ENCODE measurements at regions of chr10 and their contacts with region 1.

Region 1: GRCh38 chr10:110681023-110681681 is 37.0 kb downstream of the RBM20 start:
- DNase-seq: peak; percentile 37
- ATAC-seq: no peak
- H3K4me3 ChIP-seq: no peak overlapping the region
- H3K27ac ChIP-seq: no peak overlapping the region
- H3K4me1 ChIP-seq: no peaks in the 10 kb centered on the region
- H3K27me3 ChIP-seq: no peaks in the 10 kb centered on the region
- CTCF ChIP-seq: peak; percentile 52

Region 2: GRCh38 chr10:110733218-110733952 is 52.2 kb after region 1 on chr10:
- CTCF ChIA-PET with region 1: no interaction called
- POLR2A ChIA-PET with region 1: no interaction called
- intact Hi-C with region 1: loop called (anchors 10 kb)
- DNase-seq: peak; percentile 16
- ATAC-seq: peak; percentile 68
- H3K4me3 ChIP-seq: peak overlapping the region; percentile 66
- H3K27ac ChIP-seq: no peak overlapping the region
- H3K4me1 ChIP-seq: peaks cover 3% of the 10 kb centered on the region; the same call in 1 of the 2 replicates
- H3K27me3 ChIP-seq: no peaks in the 10 kb centered on the region
- CTCF ChIP-seq: no peak

Region 3: GRCh38 chr10:111221682-111222480 is 540.7 kb after region 1 on chr10:
- CTCF ChIA-PET with region 1: no interaction called
- POLR2A ChIA-PET with region 1: no interaction called
- intact Hi-C with region 1: no loop called
- DNase-seq: no peak
- ATAC-seq: no peak
- H3K4me3 ChIP-seq: no peak overlapping the region
- H3K27ac ChIP-seq: no peak overlapping the region
- H3K4me1 ChIP-seq: no peaks in the 10 kb centered on the region
- H3K27me3 ChIP-seq: 0 out of 2 replicates have a peak, but pooled peaks cover 5% of the 10 kb centered on the region
- CTCF ChIP-seq: no peak